CD8-positive, alpha-beta T cell (primary cell): ENCODE measurements at regions of chr21 and their contacts with region 1.

Region 1: GRCh38 chr21:42973991-42974831 is at the start of gene PKNOX1:
- DNase-seq: peak; percentile 98 to 100 (median 99)
- ATAC-seq: peak; percentile 85
- H3K4me3 ChIP-seq: peak within 1 kb of the TSS; percentile 83 to 87
- H3K4me3 Mint-ChIP-seq: peak within 1 kb of the TSS; percentile 91
- H3K27ac ChIP-seq: peak within 1 kb of the TSS; percentile 81 to 98
- H3K27ac Mint-ChIP-seq: peak within 1 kb of the TSS; percentile 94
- H3K4me1 ChIP-seq: peaks cover 18% of the 10 kb centered on the region
- H3K4me1 Mint-ChIP-seq: peaks cover 22% of the 10 kb centered on the region
- H3K27me3 ChIP-seq: no peaks in the 10 kb centered on the region
- H3K27me3 Mint-ChIP-seq: no peaks in the 10 kb centered on the region
- CTCF ChIP-seq: no peak
- total RNA-seq, gene PKNOX1: 10.3 to 11.1 TPM

Region 2: GRCh38 chr21:42381334-42381984 is 592.8 kb before region 1 on chr21:
- CTCF ChIA-PET with region 1: no interaction called
- POLR2A ChIA-PET with region 1: no interaction called
- intact Hi-C with region 1: no loop called
- DNase-seq: peak in 6 of 9 experiments; percentile 28 to 71 (median 54)
- ATAC-seq: peak; percentile 59
- H3K4me3 ChIP-seq: no peak overlapping the region
- H3K4me3 Mint-ChIP-seq: no peak overlapping the region
- H3K27ac ChIP-seq: no peak overlapping the region
- H3K27ac Mint-ChIP-seq: peak overlapping the region; percentile 9
- H3K4me1 ChIP-seq: peaks cover 10% of the 10 kb centered on the region
- H3K4me1 Mint-ChIP-seq: peaks cover 15% of the 10 kb centered on the region
- H3K27me3 ChIP-seq: no peaks in the 10 kb centered on the region
- H3K27me3 Mint-ChIP-seq: no peaks in the 10 kb centered on the region
- CTCF ChIP-seq: peak; percentile 44

Region 3: DNA sequence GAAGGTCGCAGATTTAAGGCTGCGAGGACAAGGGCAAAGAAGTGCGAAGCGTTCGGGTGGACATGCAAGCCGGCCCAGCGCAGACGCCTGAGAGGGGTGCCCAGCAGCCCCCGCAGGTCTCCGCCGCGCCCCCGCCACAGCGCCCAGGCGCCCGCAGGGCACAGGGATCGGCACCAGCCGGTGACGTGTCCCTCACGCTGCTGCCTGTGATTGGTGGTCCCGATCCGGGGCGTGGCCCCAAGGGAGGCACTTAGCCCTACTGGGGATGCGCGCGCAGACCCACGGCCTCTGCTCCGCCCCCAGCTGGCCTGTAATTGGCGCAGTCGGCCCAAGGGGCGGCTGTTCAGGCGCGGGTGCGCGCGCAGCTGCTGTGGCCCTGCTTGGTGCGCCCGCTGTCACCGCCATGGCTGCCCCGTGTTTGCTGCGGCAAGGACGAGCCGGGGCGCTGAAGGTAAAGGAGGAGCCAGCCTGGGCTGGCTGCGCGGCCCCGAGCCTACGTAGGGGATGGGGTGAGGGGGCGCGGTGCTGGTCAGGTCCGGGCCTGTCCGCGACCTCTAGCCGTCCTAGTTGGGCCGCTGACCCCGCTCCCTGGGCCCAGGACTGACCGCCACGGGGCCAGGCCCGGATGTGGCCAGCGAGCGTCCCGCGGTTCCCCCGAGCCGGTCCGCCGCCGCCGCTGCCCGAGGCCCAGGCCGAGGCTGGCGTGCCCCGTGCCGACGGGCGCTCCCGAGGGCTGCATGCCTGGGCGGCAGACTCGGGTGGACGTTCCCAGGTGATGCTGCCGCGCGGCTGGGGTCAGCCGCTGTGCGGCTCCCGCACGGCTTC is 81.1 kb before region 1 on chr21 and contains the start of gene NDUFV3:
- CTCF ChIA-PET with region 1: no interaction called
- POLR2A ChIA-PET with region 1: interaction called, 12 read pairs
- intact Hi-C with region 1: loop called in 1 of 2 experiments (anchors 1 kb)
- DNase-seq: peak; percentile 100
- ATAC-seq: peak; percentile 96
- H3K4me3 ChIP-seq: peak within 1 kb of the TSS; percentile 70 to 94
- H3K4me3 Mint-ChIP-seq: peak within 1 kb of the TSS; percentile 85
- H3K27ac ChIP-seq: peak within 1 kb of the TSS; percentile 92 to 93
- H3K27ac Mint-ChIP-seq: peak within 1 kb of the TSS; percentile 98
- H3K4me1 ChIP-seq: peaks cover 14% of the 10 kb centered on the region
- H3K4me1 Mint-ChIP-seq: peaks cover 23% of the 10 kb centered on the region
- H3K27me3 ChIP-seq: no peaks in the 10 kb centered on the region
- H3K27me3 Mint-ChIP-seq: no peaks in the 10 kb centered on the region
- CTCF ChIP-seq: no peak
- total RNA-seq, gene NDUFV3: 18.0 to 18.2 TPM

Region 4: DNA sequence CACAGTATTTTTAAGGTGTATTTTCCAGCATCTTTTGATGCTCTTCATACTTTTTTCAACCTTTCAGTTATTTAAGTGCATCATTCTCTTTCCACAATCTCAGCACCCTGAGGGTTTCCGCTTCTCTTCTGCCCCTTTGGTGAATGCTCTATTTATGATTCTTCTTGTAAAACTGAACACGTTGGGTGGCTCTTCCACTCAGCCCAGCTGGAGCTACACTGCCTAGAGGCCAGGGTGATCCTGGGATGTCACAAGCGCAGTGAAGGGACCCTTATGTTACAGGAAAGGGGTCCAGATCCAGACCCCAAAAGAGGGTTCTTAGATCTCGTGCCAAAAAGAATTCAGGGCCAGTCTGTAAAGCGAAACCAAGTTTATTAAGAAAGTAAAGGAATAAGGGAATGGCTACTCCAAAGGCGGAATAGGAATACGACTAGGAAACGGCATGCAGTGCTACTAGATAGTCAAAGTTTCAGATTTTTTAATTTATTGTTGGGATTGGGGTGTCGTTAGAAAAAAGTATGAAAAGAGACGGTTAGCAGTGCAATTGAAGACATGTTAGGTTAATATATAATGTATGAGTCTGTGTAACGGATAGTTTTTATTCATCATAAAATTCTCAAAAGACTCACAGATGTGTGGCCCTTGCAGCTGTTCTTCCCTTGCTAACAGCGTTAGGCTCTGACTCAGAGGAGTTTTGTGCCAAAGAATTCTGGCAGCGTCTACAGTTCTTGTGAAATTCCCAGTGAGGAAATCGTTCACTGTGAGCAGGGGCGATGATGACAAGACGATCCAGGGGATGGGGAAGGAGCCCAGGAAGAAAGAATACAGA is 34.4 kb before region 1 on chr21:
- CTCF ChIA-PET with region 1: no interaction called
- POLR2A ChIA-PET with region 1: no interaction called
- intact Hi-C with region 1: no loop called
- DNase-seq: no peak
- ATAC-seq: no peak
- H3K4me3 ChIP-seq: no peak overlapping the region
- H3K4me3 Mint-ChIP-seq: no peak overlapping the region
- H3K27ac ChIP-seq: no peak overlapping the region
- H3K27ac Mint-ChIP-seq: no peak overlapping the region
- H3K4me1 ChIP-seq: no peaks in the 10 kb centered on the region
- H3K4me1 Mint-ChIP-seq: no peaks in the 10 kb centered on the region
- H3K27me3 ChIP-seq: no peaks in the 10 kb centered on the region
- H3K27me3 Mint-ChIP-seq: no peaks in the 10 kb centered on the region
- CTCF ChIP-seq: no peak

Region 5: GRCh38 chr21:43646550-43647260 is 672.5 kb after region 1 on chr21:
- CTCF ChIA-PET with region 1: no interaction called
- POLR2A ChIA-PET with region 1: no interaction called
- intact Hi-C with region 1: loop called in 1 of 2 experiments (anchors 5 kb)
- DNase-seq: peak; percentile 66 to 91 (median 84)
- ATAC-seq: peak; percentile 99
- H3K4me3 ChIP-seq: no peak overlapping the region
- H3K4me3 Mint-ChIP-seq: no peak overlapping the region
- H3K27ac ChIP-seq: no peak overlapping the region
- H3K27ac Mint-ChIP-seq: peak overlapping the region; percentile 53
- H3K4me1 ChIP-seq: peaks cover 17% of the 10 kb centered on the region
- H3K4me1 Mint-ChIP-seq: peaks cover 15% of the 10 kb centered on the region
- H3K27me3 ChIP-seq: peaks cover 0 to 4% of the 10 kb centered on the region in 2 experiments
- H3K27me3 Mint-ChIP-seq: peaks cover 4% of the 10 kb centered on the region
- CTCF ChIP-seq: peak; percentile 98

Region 6: DNA sequence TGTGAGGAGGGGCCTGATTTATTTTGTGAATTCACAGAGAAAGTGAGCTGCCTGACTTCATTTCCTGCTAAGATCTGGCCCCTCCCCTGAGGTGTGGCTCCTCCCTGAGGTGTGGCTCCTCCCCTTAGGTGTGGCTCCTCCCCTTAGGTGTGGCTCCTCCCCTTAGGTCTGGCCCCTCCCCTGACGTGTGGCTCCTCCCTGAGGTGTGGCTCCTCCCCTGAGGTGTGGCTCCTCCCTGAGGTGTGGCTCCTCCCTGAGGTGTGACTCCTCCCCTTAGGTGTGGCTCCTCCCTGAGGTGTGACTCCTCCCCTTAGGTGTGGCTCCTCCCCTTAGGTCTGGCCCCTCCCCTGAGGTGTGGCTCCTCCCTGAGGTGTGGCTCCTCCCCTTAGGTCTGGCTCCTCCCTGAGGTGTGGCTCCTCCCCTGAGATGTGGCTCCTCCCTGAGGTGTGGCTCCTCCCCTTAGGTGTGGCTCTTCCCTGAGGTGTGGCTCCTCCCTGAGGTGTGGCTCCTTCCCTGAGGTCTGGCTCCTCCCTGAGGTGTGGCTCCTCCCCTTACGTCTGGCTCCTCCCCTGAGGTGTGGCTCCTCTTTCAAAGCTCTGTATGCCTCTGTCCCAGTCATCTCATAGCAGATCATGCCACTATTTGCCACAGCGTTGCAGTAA is 1454.2 kb after region 1 on chr21:
- CTCF ChIA-PET with region 1: no interaction called
- POLR2A ChIA-PET with region 1: no interaction called
- intact Hi-C with region 1: loop called in 1 of 2 experiments (anchors 5 kb)
- DNase-seq: peak in 7 of 9 experiments; percentile 29 to 71 (median 44)
- ATAC-seq: peak; percentile 90
- H3K4me3 ChIP-seq: no peak overlapping the region
- H3K4me3 Mint-ChIP-seq: no peak overlapping the region
- H3K27ac ChIP-seq: no peak overlapping the region
- H3K27ac Mint-ChIP-seq: no peak overlapping the region
- H3K4me1 ChIP-seq: no peaks in the 10 kb centered on the region
- H3K4me1 Mint-ChIP-seq: no peaks in the 10 kb centered on the region
- H3K27me3 ChIP-seq: peaks cover 0 to 2% of the 10 kb centered on the region in 2 experiments
- H3K27me3 Mint-ChIP-seq: no peaks in the 10 kb centered on the region
- CTCF ChIP-seq: no peak